Mammary epithelial cell (primary cell): ENCODE measurements at regions of chr2 and their contacts with region 1.

Region 1: GRCh38 chr2:234411793-234412192 is 85.1 kb downstream of the ARL4C start:
- DNase-seq: no peak
- H3K4me3 ChIP-seq: no peak overlapping the region
- H3K27ac ChIP-seq: no peak overlapping the region
- H3K4me1 ChIP-seq: peaks cover 11% of the 10 kb centered on the region
- H3K27me3 ChIP-seq: no peaks in the 10 kb centered on the region
- CTCF ChIP-seq: no peak

Region 2: DNA sequence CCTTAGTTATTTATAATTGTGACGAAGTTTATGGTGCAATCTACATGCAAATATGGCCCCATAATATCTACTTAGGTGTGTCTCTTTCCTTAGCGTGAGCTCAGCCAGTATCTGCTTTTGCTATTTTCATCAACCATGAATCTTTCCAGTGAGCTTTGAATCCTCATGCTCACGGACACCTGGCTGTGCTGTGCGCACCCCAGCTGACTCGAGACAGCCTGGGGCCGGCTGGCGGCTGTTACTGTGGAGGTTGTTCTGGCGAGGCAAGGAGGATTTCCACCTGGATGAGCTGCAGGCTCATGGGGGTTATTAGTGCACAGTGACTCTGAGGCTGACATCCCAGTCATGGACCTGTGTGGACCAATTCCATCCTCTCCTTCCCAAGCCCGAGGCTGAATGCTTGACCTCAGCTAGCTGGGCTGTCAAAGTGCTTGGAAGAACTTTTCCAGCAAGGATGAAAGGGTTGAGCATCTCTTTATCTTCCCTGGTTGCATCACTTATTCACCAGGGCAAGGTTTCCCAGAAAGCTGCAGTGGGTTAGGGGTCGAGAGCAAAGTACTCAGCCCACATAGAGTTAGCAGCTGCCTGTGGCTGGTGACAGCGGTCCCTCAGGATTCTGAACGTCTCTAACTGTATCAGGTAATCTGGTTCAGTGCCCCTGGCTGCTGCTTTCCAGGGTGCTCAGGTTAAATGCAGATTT is 56.6 kb before region 1 on chr2:
- CTCF ChIA-PET with region 1: no interaction called
- dilution Hi-C with region 1: loop called (anchors 10 kb)
- in situ Hi-C with region 1: no loop called
- intact Hi-C with region 1: no loop called
- DNase-seq: no peak
- H3K4me3 ChIP-seq: no peak overlapping the region
- H3K27ac ChIP-seq: no peak overlapping the region
- H3K4me1 ChIP-seq: no peaks in the 10 kb centered on the region
- H3K27me3 ChIP-seq: no peaks in the 10 kb centered on the region
- CTCF ChIP-seq: no peak

Region 3: DNA sequence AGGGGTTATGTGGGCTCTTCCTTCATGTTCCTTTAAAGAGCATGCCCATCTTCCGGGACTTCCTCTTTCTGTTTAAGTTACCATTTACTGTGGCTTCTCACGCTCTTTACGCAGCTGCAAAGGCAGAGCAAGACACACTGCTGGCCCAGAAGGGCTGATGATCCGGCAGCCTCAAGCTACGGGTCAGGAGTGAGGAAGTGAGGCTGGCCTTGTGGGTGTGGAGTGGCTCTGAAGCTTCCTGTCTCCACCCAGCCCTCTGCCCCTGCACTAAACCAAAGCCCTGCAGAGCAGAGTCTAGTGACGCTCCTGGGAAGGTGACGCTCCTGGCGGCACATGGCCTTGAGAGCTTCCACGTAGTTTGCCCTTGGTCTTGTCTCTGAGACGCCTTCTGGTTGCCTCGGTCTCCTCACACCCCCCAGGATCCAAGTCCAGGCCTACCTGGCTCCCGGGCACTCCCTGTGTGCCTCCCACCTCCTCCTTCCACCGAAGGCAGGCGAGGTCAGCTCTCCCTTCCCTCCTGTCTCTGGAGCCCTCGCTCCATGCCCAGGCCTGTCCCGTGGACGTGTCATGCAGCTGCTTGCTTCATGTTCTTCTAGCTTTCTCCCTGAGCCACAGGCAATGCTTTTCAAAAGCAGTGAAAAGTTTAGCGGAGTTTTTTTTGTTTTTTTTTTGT is 34.7 kb after region 1 on chr2:
- CTCF ChIA-PET with region 1: no interaction called
- dilution Hi-C with region 1: no loop called
- in situ Hi-C with region 1: no loop called
- intact Hi-C with region 1: loop called (anchors 5 kb)
- DNase-seq: peak; percentile 96
- H3K4me3 ChIP-seq: peak overlapping the region in 1 of 3 experiments; percentile 5
- H3K27ac ChIP-seq: peak overlapping the region; percentile 79
- H3K4me1 ChIP-seq: peaks cover 34% of the 10 kb centered on the region
- H3K27me3 ChIP-seq: no peaks in the 10 kb centered on the region
- CTCF ChIP-seq: no peak

Region 4: GRCh38 chr2:234478121-234478858 is 66.5 kb after region 1 on chr2:
- CTCF ChIA-PET with region 1: no interaction called
- dilution Hi-C with region 1: loop called (anchors 5 kb)
- in situ Hi-C with region 1: no loop called
- intact Hi-C with region 1: no loop called
- DNase-seq: peak; percentile 37
- H3K4me3 ChIP-seq: no peak overlapping the region
- H3K27ac ChIP-seq: no peak overlapping the region
- H3K4me1 ChIP-seq: peaks cover 14% of the 10 kb centered on the region
- H3K27me3 ChIP-seq: no peaks in the 10 kb centered on the region
- CTCF ChIP-seq: no peak